Heart left ventricle (tissue), 16 donors: ENCODE measurements at regions of chr4 and their contacts with region 1.

Region 1: GRCh38 chr4:74932816-74933561 is at the start of gene PARM1:
- DNase-seq: peak; percentile 90 to 95 (median 93)
- ATAC-seq: peak; percentile 86 to 98 (median 95)
- H3K4me3 ChIP-seq: peak within 1 kb of the TSS; percentile 53 to 86 (median 74)
- H3K27ac ChIP-seq: peak within 1 kb of the TSS; percentile 44 to 91 (median 80)
- H3K4me1 ChIP-seq: peaks cover 0 to 29% (median 9%) of the 10 kb centered on the region in 12 donors
- H3K27me3 ChIP-seq: peaks cover 0 to 36% (median 0%) of the 10 kb centered on the region in 9 donors
- CTCF ChIP-seq: peak; percentile 44 to 82 (median 70)
- POLR2A ChIP-seq: peak; percentile 26 to 81
- total RNA-seq, gene PARM1: 40.1 to 144 (median 103) TPM

Region 2: DNA sequence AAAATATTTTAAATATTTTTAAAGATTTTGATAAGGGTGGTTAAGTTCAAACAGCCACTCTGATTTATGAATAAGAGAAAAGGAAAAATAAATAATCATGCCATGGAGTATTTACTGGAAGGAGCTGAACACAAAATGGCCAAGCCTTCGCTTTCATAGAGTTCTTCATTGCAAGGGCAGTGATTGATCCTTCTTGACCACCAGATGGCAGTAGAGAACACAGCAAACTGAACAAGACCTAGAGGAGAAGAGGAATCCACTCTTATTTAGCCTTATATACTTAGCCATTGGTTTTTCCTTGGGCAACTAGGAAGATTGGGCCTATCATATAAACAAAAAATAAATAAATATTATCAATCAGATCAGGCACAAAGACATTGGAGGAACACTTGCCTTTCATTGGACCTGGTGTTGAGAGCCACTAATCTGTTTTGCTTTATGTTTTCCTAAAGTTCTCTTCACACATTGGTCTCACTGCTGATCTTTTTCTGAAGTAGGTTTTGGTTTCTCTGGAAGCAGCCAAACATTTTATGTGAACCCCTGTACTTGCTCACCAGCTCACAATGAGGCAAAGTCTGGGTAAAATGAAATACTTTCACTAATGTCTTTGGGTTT is 58.1 kb before region 1 on chr4:
- intact Hi-C with region 1: loop called in 1 of 10 experiments (anchors 5 kb)
- DNase-seq: peak in 2 of 5 donors; percentile 27 to 33
- ATAC-seq: peak; percentile 64 to 90 (median 82)
- H3K4me3 ChIP-seq: no peak overlapping the region
- H3K27ac ChIP-seq: no peak overlapping the region
- H3K4me1 ChIP-seq: peaks cover 0 to 3% (median 0%) of the 10 kb centered on the region in 12 donors
- H3K27me3 ChIP-seq: no peaks in the 10 kb centered on the region
- CTCF ChIP-seq: peak; percentile 77 to 96 (median 90)
- POLR2A ChIP-seq: no peak

Region 3: GRCh38 chr4:75056277-75056676 is 123.3 kb after region 1 on chr4:
- intact Hi-C with region 1: loop called in 6 of 10 experiments (anchors 2 to 10 kb)
- DNase-seq: no peak
- ATAC-seq: peak in 3 of 4 donors; percentile 55 to 63 (median 60)
- H3K4me3 ChIP-seq: no peak overlapping the region
- H3K27ac ChIP-seq: no peak overlapping the region
- H3K4me1 ChIP-seq: peaks cover 0 to 9% (median 0%) of the 10 kb centered on the region in 12 donors
- H3K27me3 ChIP-seq: no peaks in the 10 kb centered on the region
- CTCF ChIP-seq: peak in 3 of 12 donors; percentile 9 to 33 (median 12)
- POLR2A ChIP-seq: no peak

Region 4: GRCh38 chr4:75289914-75290582 is 357.1 kb after region 1 on chr4:
- intact Hi-C with region 1: loop called in 4 of 10 experiments (anchors 2 to 10 kb)
- DNase-seq: no peak
- ATAC-seq: no peak
- H3K4me3 ChIP-seq: no peak overlapping the region
- H3K27ac ChIP-seq: no peak overlapping the region
- H3K4me1 ChIP-seq: no peaks in the 10 kb centered on the region
- H3K27me3 ChIP-seq: no peaks in the 10 kb centered on the region
- CTCF ChIP-seq: peak in 10 of 12 donors; percentile 10 to 36 (median 22)
- POLR2A ChIP-seq: no peak

Region 5: DNA sequence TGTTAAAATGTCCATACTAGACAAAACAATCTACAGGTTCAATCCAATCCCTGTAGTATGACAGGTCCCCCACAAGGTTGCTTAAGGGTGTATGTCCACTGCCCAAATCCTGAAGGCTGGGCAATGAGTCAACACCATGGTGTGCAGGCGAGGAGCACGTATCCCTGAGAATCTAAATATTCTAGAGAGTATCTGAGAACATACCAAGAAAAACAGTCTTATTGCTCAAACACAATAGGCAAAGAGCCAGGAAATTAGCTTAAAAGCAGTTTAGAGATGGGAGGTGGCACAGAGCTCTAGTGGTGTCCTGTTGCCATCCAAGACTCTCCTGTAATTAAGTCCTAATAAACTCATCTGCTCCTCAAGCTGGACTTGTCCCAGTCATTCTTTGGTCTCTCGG is 544.2 kb after region 1 on chr4:
- intact Hi-C with region 1: loop called in 6 of 10 experiments (anchors 10 kb)
- DNase-seq: no peak
- ATAC-seq: no peak
- H3K4me3 ChIP-seq: no peak overlapping the region
- H3K27ac ChIP-seq: no peak overlapping the region
- H3K4me1 ChIP-seq: no peaks in the 10 kb centered on the region
- H3K27me3 ChIP-seq: no peaks in the 10 kb centered on the region
- CTCF ChIP-seq: no peak
- POLR2A ChIP-seq: no peak

Region 6: DNA sequence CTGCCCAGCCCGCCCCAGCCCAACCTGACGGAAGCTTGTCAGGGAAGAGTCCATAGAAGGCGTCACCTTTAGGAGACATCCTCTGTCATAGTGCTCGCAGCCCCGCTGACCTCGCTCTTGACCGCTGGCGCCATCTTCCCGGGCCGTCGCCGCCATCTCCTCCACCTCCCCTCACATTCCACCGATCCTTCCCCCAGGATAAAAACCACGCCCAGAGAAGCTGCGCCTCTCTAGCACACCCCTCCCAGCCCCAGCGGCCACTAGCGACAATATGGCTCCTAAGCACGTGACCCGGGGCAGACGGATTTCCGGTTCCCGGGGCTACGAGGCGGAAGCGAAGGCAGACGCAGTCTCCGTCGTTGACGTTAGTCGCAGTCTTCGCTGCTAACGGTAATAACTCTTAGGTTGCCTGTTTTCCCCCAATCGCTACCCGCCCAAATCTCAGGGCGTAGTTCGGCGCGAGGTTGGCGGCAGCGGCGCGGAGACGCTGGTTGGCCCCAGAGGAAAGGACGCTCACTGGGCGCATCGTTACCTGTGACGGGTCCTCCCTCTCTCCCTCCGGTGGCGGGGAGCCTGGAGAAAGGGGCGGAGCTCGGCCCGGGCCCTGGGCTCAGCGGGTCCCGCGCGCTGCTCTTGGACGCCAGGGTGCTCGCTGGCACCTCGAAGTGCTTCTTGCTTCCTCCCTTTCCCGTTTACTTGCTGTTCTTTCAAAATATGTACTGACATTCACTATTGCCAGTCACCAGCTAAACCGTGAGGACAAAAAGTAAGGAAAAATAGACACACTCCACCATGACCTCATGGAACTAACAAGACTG is 581.4 kb after region 1 on chr4 and contains the starts of genes RCHY1 and THAP6:
- intact Hi-C with region 1: loop called in 2 of 10 experiments (anchors 5 to 10 kb)
- DNase-seq: peak; percentile 96 to 98 (median 96)
- ATAC-seq: peak; percentile 98
- H3K4me3 ChIP-seq: peak within 1 kb of the TSS; percentile 45 to 88 (median 76)
- H3K27ac ChIP-seq: peak within 1 kb of the TSS; percentile 33 to 99 (median 96)
- H3K4me1 ChIP-seq: peaks cover 0 to 61% (median 39%) of the 10 kb centered on the region in 12 donors
- H3K27me3 ChIP-seq: no peaks in the 10 kb centered on the region
- CTCF ChIP-seq: peak in 3 of 12 donors; percentile 7 to 38 (median 18)
- POLR2A ChIP-seq: peak in 1 of 2 donors; percentile 83
- total RNA-seq, gene RCHY1: 24.1 to 54.1 (median 41.9) TPM
- total RNA-seq, gene THAP6: 10.9 to 22.6 (median 16.3) TPM

Region 7: DNA sequence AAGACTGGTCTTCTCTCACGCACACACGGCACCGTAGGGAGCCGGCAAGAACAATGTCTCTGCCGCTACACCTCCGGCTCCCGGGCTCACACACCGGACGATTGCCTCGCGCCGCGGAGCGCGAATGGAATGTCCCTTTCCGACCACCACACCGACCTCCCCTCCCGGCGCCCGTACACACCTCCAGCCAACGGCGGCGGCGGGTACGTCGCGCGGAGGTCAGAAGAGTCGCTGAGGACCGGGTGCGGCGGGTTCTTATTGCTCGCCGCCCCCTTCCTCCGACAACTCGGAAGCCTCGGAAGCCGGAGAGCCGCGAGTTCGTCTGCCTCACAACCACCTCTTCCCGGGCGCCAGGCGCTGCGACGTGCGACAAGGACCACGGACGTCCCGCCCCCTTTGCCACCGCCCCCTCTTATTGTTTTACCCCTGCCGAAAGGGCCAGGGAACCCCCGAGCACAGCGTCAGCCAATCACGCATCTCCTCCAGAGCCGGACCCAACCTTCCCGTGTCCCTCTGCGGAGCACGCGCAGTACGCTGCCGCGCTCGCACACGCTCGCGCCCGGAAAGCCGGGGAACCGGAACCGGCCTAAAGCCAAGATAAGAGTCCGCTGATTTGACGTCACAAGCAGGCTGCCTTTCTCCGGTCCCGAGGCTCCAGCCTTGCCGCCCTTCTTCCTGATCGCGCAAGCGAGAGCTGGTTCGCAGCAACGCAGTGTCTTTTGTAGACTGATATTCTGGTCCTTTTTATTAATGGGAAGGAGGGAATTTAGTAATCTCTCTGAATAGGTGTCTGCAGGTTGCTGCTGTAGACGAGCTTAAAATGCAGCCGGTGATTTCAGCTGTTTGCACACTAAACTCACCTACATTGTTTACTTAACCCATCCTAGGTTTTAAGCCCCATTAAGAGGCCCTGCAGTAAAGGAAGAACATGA is 740.3 kb after region 1 on chr4 and contains the start of gene G3BP2:
- intact Hi-C with region 1: no loop called
- DNase-seq: peak; percentile 98 to 99 (median 99)
- ATAC-seq: peak; percentile 99 to 100 (median 99)
- H3K4me3 ChIP-seq: peak within 1 kb of the TSS; percentile 74 to 100 (median 83)
- H3K27ac ChIP-seq: peak within 1 kb of the TSS; percentile 83 to 99 (median 96)
- H3K4me1 ChIP-seq: peaks cover 0 to 47% (median 31%) of the 10 kb centered on the region in 12 donors
- H3K27me3 ChIP-seq: no peaks in the 10 kb centered on the region
- CTCF ChIP-seq: peak in 1 of 12 donors; percentile 8
- POLR2A ChIP-seq: peak; percentile 69 to 87
- total RNA-seq, gene G3BP2: 70.8 to 126 (median 87.6) TPM